Ascending aorta (tissue), 2 donors: ENCODE measurements at regions of chr2 and their contacts with region 1.

Region 1: GRCh38 chr2:71852141-71852711 is 295.4 kb downstream of the CYP26B1 start:
- DNase-seq: peak in 1 of 2 donors; percentile 66
- H3K4me3 ChIP-seq: peak overlapping the region in 1 of 2 donors; percentile 18
- H3K27ac ChIP-seq: peak overlapping the region; percentile 87 to 91
- H3K4me1 ChIP-seq: peaks cover 27 to 43% of the 10 kb centered on the region in 2 donors
- H3K27me3 ChIP-seq: no peaks in the 10 kb centered on the region
- CTCF ChIP-seq: no peak

Region 2: GRCh38 chr2:70301344-70302194 is 1550.7 kb before region 1 on chr2 and contains the start of gene FAM136A:
- intact Hi-C with region 1: loop called (anchors 5 kb)
- DNase-seq: peak; percentile 16 to 90
- H3K4me3 ChIP-seq: peak within 1 kb of the TSS; percentile 66 to 84
- H3K27ac ChIP-seq: peak within 1 kb of the TSS; percentile 80
- H3K4me1 ChIP-seq: peaks cover 0 to 5% of the 10 kb centered on the region in 2 donors
- H3K27me3 ChIP-seq: no peaks in the 10 kb centered on the region
- CTCF ChIP-seq: peak; percentile 94 to 99 (median 97)
- total RNA-seq, gene FAM136A: 2.0 TPM

Region 3: GRCh38 chr2:71609958-71610357 is 242.3 kb before region 1 on chr2:
- intact Hi-C with region 1: loop called (anchors 5 kb)
- DNase-seq: no peak
- H3K4me3 ChIP-seq: no peak overlapping the region
- H3K27ac ChIP-seq: no peak overlapping the region
- H3K4me1 ChIP-seq: peaks cover 0 to 12% of the 10 kb centered on the region in 2 donors
- H3K27me3 ChIP-seq: no peaks in the 10 kb centered on the region
- CTCF ChIP-seq: peak in 2 of 3 experiments; percentile 32 to 53

Region 4: GRCh38 chr2:71882949-71883472 is 30.8 kb after region 1 on chr2:
- intact Hi-C with region 1: loop called (anchors 2 kb)
- DNase-seq: peak in 1 of 2 donors; percentile 84
- H3K4me3 ChIP-seq: no peak overlapping the region
- H3K27ac ChIP-seq: no peak overlapping the region
- H3K4me1 ChIP-seq: peaks cover 21 to 40% of the 10 kb centered on the region in 2 donors
- H3K27me3 ChIP-seq: no peaks in the 10 kb centered on the region
- CTCF ChIP-seq: no peak

Region 5: DNA sequence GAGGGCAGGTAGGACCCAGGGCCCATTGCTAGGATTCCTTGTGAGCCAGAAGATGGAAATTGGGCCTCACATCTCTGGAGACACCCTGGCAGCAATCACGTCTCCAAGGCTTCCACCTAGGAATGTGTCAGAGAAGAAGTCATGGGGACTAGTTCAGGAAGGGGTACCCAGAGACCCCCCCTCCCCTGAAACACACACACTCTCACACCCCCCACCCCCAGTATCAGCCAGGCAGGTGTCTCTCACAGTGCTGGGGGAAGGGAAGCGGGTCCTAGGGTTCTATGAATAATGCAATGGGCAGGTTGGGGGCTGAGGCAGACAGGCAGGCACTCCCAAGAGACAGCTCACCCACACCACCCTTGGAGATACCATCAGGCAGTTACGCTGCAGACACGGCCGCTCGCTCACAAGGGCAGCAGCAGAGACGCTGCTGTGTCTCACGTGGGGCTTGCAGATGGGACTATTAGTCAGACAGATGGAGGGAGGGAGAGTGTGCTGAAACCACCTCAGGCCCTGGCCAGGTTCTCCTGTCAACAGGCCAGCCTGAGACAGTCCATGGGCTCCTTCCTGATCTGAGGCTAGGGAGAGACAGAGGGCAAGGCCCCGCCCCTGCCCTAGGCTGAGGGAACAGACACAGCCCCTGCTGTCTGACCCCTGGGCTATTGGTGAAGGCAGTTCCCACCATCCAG is 160.8 kb after region 1 on chr2:
- intact Hi-C with region 1: no loop called
- DNase-seq: peak in 1 of 2 donors; percentile 52
- H3K4me3 ChIP-seq: no peak overlapping the region
- H3K27ac ChIP-seq: no peak overlapping the region
- H3K4me1 ChIP-seq: no peaks in the 10 kb centered on the region
- H3K27me3 ChIP-seq: no peaks in the 10 kb centered on the region
- CTCF ChIP-seq: no peak